Activated CD4-positive, alpha-beta T cell treated with anti-CD3 and anti-CD28 coated beads for 36 hours (primary cell): ENCODE measurements at regions of chr1 and their contacts with region 1.

Region 1: DNA sequence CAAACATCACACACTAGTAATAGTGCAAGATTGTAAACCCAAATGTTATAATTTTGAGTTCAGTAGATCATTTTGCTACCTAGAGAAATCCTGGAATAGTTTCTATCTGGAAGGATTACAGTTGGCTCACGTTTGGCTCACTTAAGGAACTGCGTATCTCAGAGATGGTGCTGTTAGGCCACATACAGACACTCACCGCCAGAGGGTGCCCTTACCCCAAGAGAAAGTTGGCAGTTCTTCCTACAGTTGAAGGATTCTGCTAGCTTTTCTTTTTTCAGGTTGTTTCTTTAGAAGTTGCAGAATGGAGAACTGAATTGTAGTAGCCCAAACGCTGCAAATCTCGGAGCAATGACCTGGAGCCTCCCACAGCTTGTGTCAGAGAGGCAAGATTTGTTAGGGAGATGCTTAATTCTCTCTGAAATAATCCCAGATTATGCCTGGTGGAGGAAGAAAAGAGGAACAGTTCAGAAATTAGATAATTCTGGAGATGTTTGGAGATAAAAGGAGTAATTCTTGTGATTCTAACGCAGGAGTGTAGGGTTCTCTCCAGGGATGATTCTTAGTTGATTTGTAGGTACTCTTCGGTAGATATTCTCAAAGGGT is 87.9 kb upstream of the PAPPA2 start:
- DNase-seq: peak; percentile 84
- ATAC-seq: peak; percentile 65
- H3K4me3 Mint-ChIP-seq: no peak overlapping the region
- H3K27ac Mint-ChIP-seq: no peak overlapping the region
- H3K4me1 Mint-ChIP-seq: no peaks in the 10 kb centered on the region
- H3K27me3 Mint-ChIP-seq: peaks cover 8% of the 10 kb centered on the region

Region 2: DNA sequence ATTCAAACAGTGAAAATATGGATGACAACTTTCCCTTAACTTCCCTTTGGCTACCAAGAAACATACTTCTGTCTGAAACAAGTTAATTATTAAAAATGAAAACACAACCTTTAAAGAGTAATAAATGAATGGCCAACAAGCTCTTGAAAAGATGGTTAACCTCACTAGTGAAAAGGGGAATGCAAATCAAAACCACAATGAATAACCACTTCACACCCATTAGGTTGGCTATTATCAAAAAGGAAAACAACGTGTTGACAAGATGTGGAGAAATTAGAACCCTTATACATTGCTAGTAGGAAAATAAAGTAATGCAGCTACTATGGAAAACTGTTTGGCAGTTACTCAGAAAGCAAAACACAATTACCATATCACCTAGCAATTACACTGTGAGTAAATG is 182.0 kb before region 1 on chr1:
- CTCF ChIA-PET with region 1: no interaction called
- POLR2A ChIA-PET with region 1: no interaction called
- intact Hi-C with region 1: no loop called
- DNase-seq: no peak
- ATAC-seq: peak; percentile 61
- H3K4me3 Mint-ChIP-seq: no peak overlapping the region
- H3K27ac Mint-ChIP-seq: no peak overlapping the region
- H3K4me1 Mint-ChIP-seq: peaks cover 79% of the 10 kb centered on the region
- H3K27me3 Mint-ChIP-seq: no peaks in the 10 kb centered on the region

Region 3: DNA sequence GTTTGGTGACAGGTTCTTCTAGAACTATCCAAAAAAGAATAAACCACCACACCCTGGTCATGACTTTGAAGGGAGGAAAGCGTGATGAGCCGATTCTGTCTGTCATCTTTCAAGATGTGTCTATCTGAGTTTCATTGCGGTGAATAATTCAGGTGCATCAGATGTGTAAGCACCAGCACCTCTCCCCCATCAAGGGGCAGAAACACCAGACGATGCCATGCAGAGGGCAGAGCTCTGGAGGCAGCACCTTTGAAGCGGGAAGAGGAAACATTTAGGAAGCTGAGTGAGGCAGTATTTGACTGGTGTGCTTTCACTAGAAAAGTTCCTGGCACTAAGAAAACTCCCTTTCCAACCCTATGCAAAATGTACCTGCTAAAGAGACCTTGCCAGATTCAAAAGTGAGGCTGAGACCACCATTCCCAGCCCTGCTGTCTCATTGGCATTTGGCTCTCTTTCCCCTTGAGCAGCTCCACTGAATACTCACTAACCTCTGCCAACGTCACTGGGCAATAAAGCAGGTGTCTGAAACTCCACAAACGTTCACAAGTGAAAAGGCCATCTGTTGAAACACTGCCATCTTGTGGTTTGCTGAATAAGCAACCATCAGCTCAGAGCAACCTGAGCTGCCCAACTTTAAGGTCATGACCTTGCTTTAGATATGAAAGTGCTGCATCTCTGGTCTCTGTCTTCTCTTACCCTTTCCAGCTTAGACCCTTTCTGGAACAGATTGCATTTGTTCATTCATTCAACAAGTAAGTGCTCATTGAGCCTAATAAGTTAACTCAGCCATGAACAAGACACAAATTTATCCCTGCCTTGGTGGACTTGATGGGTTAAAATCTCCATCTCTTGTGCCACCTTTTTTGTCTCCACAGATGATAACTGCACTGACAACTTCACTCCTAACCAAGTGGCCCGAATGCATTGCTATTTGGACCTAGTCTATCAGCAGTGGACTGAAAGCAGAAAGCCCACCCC is 316.5 kb after region 1 on chr1:
- CTCF ChIA-PET with region 1: interaction called, 4 read pairs
- POLR2A ChIA-PET with region 1: no interaction called
- intact Hi-C with region 1: loop called (anchors 1 to 5 kb)
- DNase-seq: peak; percentile 20
- ATAC-seq: peak; percentile 64
- H3K4me3 Mint-ChIP-seq: no peak overlapping the region
- H3K27ac Mint-ChIP-seq: no peak overlapping the region
- H3K4me1 Mint-ChIP-seq: no peaks in the 10 kb centered on the region
- H3K27me3 Mint-ChIP-seq: peaks cover 1% of the 10 kb centered on the region

Region 4: DNA sequence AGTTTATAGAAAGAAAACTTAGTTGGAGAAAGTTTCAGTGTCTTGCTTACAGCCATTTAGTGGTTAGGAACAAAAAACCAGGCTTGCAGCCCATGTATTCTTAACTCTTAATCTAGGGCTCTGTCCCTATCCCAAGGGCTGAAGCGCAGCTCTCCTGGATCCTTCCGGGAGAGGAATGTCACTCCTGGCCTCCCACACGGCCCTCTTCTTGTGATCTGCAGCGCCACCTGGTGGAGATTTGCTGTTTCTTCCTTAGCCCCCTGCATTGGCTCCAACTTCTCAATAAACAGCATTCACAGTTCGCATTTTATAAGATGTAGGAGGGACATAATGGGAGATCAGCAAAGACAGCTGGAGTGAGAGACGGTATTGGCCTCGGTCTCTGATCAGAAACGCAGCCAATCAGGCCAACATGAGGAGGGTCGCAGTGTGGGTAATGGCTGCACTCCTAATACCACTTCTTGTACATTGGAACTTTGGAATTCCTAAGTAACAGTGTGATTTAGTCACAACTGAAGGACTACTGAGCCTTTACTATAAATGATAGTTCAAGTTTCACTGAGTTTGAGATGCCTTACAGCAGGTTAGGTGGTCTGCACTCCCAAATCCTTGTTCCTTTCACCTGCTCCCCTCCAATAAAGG is 506.0 kb after region 1 on chr1:
- CTCF ChIA-PET with region 1: no interaction called
- POLR2A ChIA-PET with region 1: no interaction called
- intact Hi-C with region 1: loop called (anchors 1 kb)
- DNase-seq: peak; percentile 74
- ATAC-seq: no peak
- H3K4me3 Mint-ChIP-seq: no peak overlapping the region
- H3K27ac Mint-ChIP-seq: no peak overlapping the region
- H3K4me1 Mint-ChIP-seq: no peaks in the 10 kb centered on the region
- H3K27me3 Mint-ChIP-seq: peaks cover 8% of the 10 kb centered on the region